Cardiac septum (tissue), 1 donor: ENCODE measurements at regions of chr4 and their contacts with region 1.

Region 1: DNA sequence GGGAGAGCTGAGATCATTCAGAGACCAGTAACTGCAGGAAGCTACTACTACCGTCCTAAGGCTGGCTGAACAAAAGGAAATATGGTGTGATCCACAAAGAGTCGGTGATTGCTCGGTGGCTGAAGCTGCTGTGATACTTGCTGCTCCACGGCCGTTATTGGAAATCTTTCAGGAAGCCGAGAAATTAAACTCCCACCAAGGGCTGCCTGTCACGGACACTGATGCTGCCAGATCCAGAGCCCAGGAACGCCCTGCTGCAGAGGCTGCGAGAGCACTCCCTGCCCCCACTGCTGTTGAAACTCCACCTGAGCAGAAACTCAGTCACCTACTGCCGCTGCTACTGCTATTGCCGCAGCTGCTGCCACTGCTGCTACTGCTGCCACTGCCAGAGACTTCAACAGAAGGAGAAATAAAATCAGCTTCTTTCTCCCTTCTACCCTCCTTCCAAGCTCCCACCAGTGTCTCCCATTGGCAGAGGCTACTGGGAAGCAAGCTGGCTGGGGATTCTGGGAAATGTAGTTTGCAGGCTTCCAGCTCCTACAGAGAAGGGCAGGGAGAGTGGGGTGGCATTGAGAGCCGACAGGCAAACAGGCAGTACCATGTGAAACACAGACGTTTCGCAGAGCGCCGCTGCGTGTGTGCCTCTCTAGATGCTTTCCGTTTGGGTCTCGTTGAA is 126.0 kb upstream of the ENPP6 start:
- DNase-seq: peak; percentile 90

Region 2: GRCh38 chr4:184282251-184282713 is 61.4 kb before region 1 on chr4:
- intact Hi-C with region 1: loop called (anchors 5 kb)
- DNase-seq: no peak